ENCODE measurements at regions of chr10 and their contacts with region 1.

Region 1: DNA sequence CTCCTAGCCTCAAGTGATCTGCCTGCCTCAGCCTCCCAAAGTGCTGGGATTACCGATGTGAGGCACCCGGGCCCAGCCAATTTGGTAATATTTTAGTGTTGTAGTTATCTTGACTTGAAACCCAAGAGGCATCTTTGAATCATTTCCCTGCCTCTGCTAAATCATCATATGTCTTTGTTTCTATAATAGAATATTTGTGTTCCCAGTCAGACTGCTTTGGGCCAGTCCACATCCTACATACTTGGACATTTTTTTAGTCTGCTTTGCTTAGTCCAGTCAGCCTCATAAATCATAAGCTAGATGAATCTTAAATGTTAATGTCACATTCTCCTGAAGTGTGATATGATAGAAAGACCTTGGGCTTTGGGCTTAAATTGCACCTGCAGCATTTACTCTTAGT is 5.9 kb downstream of the STAM start:
- DNase-seq: no peak
- H3K4me3 ChIP-seq: no peak overlapping the region
- H3K4me3 Mint-ChIP-seq: no peak overlapping the region
- H3K27ac Mint-ChIP-seq: peak overlapping the region; percentile 83
- H3K4me1 ChIP-seq: peaks cover 37% of the 10 kb centered on the region
- H3K4me1 Mint-ChIP-seq: peaks cover 29% of the 10 kb centered on the region
- H3K27me3 ChIP-seq: no peaks in the 10 kb centered on the region
- H3K27me3 Mint-ChIP-seq: no peaks in the 10 kb centered on the region
- CTCF ChIP-seq: no peak

Region 2: GRCh38 chr10:17673456-17674061 is 23.7 kb after region 1 on chr10:
- CTCF ChIA-PET with region 1: no interaction called
- POLR2A ChIA-PET with region 1: interaction called, 25 read pairs
- intact Hi-C with region 1: loop called (anchors 1 kb)
- DNase-seq: peak; percentile 77 to 82
- H3K4me3 ChIP-seq: no peak overlapping the region
- H3K4me3 Mint-ChIP-seq: peak overlapping the region; percentile 40
- H3K27ac Mint-ChIP-seq: peak overlapping the region; percentile 64
- H3K4me1 ChIP-seq: peaks cover 50% of the 10 kb centered on the region
- H3K4me1 Mint-ChIP-seq: peaks cover 24% of the 10 kb centered on the region
- H3K27me3 ChIP-seq: no peaks in the 10 kb centered on the region
- H3K27me3 Mint-ChIP-seq: no peaks in the 10 kb centered on the region
- CTCF ChIP-seq: no peak

Region 3: DNA sequence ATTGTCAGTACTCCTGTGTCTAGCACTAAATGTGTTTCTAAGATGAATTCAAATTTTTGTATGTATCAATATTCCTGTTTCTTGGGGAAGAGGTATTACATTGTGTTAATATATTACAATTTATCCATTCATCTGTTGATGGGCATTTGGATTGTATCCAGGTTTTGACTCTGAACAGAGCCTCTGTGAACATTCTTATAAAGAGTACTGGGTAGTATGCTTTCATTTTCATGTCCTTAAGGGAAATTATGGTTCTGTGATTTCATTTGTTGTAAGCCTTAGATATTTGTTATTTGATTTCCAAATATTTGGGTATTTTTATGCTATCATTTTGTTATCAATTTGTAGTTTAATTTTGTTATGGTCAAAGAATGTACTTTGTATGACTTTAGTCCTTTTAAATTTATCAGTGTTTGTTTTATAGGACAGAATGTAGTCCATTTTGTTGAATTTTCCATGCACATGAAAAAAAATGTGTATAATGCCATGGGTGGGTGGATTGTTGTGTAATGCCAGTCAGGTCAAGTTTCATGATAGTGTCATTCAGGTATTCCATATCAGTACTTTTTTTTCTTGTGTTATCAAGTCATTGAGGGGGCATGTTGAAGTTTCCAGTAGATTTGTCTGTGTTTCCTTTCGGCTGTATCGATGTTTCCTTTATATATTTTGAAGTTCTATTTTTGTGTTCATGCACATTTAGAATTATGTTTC is 32.6 kb after region 1 on chr10:
- CTCF ChIA-PET with region 1: no interaction called
- POLR2A ChIA-PET with region 1: no interaction called
- intact Hi-C with region 1: loop called (anchors 2 kb)
- DNase-seq: no peak
- H3K4me3 ChIP-seq: no peak overlapping the region
- H3K4me3 Mint-ChIP-seq: no peak overlapping the region
- H3K27ac Mint-ChIP-seq: no peak overlapping the region
- H3K4me1 ChIP-seq: peaks cover 9% of the 10 kb centered on the region; the same call in 1 of the 2 replicates
- H3K4me1 Mint-ChIP-seq: peaks cover 31% of the 10 kb centered on the region
- H3K27me3 ChIP-seq: no peaks in the 10 kb centered on the region
- H3K27me3 Mint-ChIP-seq: no peaks in the 10 kb centered on the region
- CTCF ChIP-seq: no peak